OCI-LY7 (cell line): ENCODE measurements at regions of chr13 and their contacts with region 1.

Region 1: GRCh38 chr13:78658635-78659449 is at the start of gene OBI1:
- DNase-seq: peak; percentile 90
- H3K4me3 ChIP-seq: peak within 1 kb of the TSS; percentile 93
- H3K27ac ChIP-seq: peak within 1 kb of the TSS; percentile 75
- H3K4me1 ChIP-seq: peaks cover 18% of the 10 kb centered on the region
- CTCF ChIP-seq: no peak
- total RNA-seq, gene OBI1: 17.9 and 18.0 TPM in 2 replicates

Region 2: DNA sequence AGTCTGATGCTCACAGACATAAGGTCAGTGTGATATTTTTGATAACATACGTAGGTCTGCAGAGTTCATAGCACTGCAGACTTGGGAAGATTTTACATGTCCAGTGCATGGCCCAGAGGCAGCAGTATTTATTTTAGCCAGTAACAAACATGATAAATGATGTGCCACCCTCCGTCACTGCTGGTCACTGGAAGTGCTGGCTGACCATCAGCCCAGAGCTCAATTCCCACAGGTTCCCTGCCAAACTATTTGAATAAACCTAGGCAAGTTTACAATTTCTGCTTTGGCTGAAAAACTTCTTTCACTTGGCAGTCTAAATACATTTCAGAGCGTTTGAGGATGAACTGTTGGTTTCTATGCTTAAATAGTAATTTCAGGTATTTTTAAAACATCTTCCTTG is 604.7 kb before region 1 on chr13:
- CTCF ChIA-PET with region 1: no interaction called
- POLR2A ChIA-PET with region 1: no interaction called
- intact Hi-C with region 1: no loop called
- DNase-seq: no peak
- H3K4me3 ChIP-seq: no peak overlapping the region
- H3K27ac ChIP-seq: no peak overlapping the region
- H3K4me1 ChIP-seq: no peaks in the 10 kb centered on the region
- CTCF ChIP-seq: no peak

Region 3: GRCh38 chr13:78603240-78603957 is 55.4 kb before region 1 on chr13 and contains the start of gene POU4F1:
- CTCF ChIA-PET with region 1: no interaction called
- POLR2A ChIA-PET with region 1: no interaction called
- intact Hi-C with region 1: loop called (anchors 5 kb)
- DNase-seq: peak; percentile 92
- H3K4me3 ChIP-seq: peak within 1 kb of the TSS; percentile 79
- H3K27ac ChIP-seq: no peak within 1 kb of the TSS
- H3K4me1 ChIP-seq: peaks cover 34% of the 10 kb centered on the region
- CTCF ChIP-seq: no peak
- total RNA-seq, gene POU4F1: 6.9 and 7.3 TPM in 2 replicates

Region 4: DNA sequence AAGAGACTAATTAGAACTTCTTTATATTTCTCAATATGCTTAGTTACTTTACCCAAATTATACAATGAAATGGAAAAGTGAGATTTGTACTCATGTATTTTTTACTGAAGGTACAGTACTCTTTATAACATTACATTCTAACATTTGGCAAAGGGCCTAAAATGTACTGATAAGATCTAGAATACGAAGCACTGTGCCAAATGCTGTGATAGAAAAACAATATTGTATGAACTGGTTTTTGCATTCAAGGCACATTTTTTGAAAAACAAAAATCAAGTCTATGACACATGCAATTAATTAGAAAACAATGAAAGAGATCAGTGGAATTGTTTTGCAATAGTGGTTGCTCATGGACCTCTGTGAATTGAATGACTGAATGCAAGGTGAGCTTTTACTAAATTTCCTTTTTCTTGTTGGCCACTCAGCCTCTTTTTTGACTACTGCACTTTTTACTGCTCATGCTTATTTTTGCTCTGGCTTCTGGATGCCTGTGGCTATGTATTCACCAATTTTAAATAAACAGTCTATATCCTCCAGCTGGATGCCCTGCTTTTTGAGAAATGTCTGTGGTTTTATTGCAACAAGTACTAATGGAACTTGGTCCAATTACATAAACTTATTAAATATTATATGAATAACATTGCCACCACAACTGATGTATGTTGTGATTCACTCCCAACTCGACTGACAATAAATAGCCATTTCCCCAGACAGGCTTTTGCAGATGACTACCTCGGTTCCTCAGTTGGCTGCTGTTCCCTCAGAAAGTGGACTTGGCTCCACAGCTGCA is 41.5 kb after region 1 on chr13:
- CTCF ChIA-PET with region 1: no interaction called
- POLR2A ChIA-PET with region 1: no interaction called
- intact Hi-C with region 1: no loop called
- DNase-seq: no peak
- H3K4me3 ChIP-seq: no peak overlapping the region
- H3K27ac ChIP-seq: no peak overlapping the region
- H3K4me1 ChIP-seq: no peaks in the 10 kb centered on the region
- CTCF ChIP-seq: no peak

Region 5: DNA sequence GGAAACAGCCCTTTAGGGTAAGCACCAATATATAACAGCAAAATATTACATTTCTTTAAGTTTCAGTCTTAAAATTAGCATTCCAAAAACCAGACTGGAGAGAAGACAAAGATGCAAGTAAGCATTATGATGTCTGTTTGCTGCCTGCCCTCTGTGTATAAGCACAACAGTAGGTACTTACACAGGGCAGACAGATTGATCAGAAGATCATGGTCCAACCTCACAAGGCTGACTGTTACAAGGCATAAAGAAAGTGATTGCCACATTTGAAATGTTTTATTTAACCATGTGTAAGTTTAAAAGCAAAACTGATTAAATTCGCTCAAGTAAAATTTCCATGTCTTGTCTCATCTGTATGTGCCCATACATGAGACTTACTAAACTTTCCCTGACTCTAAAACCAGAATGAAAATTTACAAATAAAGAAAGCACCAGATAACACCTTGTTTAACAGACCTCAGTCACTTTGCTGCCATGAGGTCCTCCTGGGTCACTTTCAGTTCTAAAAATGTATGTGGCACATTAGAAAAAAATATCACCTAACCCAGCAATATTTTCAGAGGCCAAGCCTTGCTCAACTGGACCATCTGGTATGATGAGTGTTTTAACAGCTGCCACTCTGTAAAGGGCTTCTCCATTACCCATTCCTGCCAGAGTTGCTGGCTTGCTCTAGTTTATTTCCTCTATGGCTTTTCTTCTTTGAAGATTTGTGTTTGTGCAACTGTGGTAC is 450.2 kb after region 1 on chr13:
- CTCF ChIA-PET with region 1: no interaction called
- POLR2A ChIA-PET with region 1: no interaction called
- intact Hi-C with region 1: no loop called
- DNase-seq: no peak
- H3K4me3 ChIP-seq: no peak overlapping the region
- H3K27ac ChIP-seq: no peak overlapping the region
- H3K4me1 ChIP-seq: no peaks in the 10 kb centered on the region
- CTCF ChIP-seq: no peak